ENCODE measurements at regions of chr11 and their contacts with region 1.

Region 1: GRCh38 chr11:95014184-95014821 is 10.8 kb upstream of the KDM4E start:
- DNase-seq: no peak
- ATAC-seq: no peak
- H3K4me3 ChIP-seq: no peak overlapping the region
- H3K4me3 Mint-ChIP-seq: no peak overlapping the region
- H3K27ac ChIP-seq: no peak overlapping the region
- H3K27ac Mint-ChIP-seq: no peak overlapping the region
- H3K4me1 ChIP-seq: no peaks in the 10 kb centered on the region
- H3K4me1 Mint-ChIP-seq: no peaks in the 10 kb centered on the region
- H3K27me3 ChIP-seq: peaks cover 0 to 15% of the 10 kb centered on the region in 2 experiments
- H3K27me3 Mint-ChIP-seq: peaks cover 18 to 26% of the 10 kb centered on the region in 2 donors

Region 2: GRCh38 chr11:95044010-95044409 is 29.7 kb after region 1 on chr11:
- CTCF ChIA-PET with region 1: no interaction called
- POLR2A ChIA-PET with region 1: no interaction called
- DNase-seq: no peak
- ATAC-seq: no peak
- H3K4me3 ChIP-seq: no peak overlapping the region
- H3K4me3 Mint-ChIP-seq: no peak overlapping the region
- H3K27ac ChIP-seq: no peak overlapping the region
- H3K27ac Mint-ChIP-seq: no peak overlapping the region
- H3K4me1 ChIP-seq: no peaks in the 10 kb centered on the region
- H3K4me1 Mint-ChIP-seq: no peaks in the 10 kb centered on the region
- H3K27me3 ChIP-seq: peaks cover 0 to 25% of the 10 kb centered on the region in 2 experiments
- H3K27me3 Mint-ChIP-seq: peaks cover 36 to 38% of the 10 kb centered on the region in 2 donors

Region 3: GRCh38 chr11:95055283-95055897 is 41.1 kb after region 1 on chr11:
- CTCF ChIA-PET with region 1: interaction called in 1 of 2 experiments, 14 read pairs
- POLR2A ChIA-PET with region 1: interaction called in 1 of 2 experiments, 4 read pairs
- DNase-seq: no peak
- ATAC-seq: no peak
- H3K4me3 ChIP-seq: no peak overlapping the region
- H3K4me3 Mint-ChIP-seq: no peak overlapping the region
- H3K27ac ChIP-seq: no peak overlapping the region
- H3K27ac Mint-ChIP-seq: no peak overlapping the region
- H3K4me1 ChIP-seq: no peaks in the 10 kb centered on the region
- H3K4me1 Mint-ChIP-seq: no peaks in the 10 kb centered on the region
- H3K27me3 ChIP-seq: peaks cover 0 to 23% of the 10 kb centered on the region in 2 experiments
- H3K27me3 Mint-ChIP-seq: peaks cover 44 to 47% of the 10 kb centered on the region in 2 donors

Region 4: DNA sequence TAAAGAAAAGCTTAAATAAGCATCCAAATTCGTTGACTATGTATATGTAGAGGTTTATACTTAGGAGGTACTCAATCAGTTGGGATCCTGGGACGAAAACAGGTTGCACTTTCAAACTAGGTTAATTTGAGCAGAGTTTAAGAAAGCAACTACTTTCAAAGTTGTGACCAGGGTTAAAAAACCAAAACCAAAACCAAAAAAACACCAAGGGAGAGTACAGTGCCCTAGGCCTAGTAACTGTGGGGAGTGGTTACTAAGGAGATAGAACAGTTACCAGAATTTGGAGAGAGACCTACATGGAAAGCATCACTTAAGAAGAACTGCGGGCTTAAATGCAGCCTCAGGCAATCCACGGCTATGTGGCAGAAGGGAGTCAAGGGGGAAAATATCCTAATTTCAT is 1523.8 kb after region 1 on chr11:
- CTCF ChIA-PET with region 1: no interaction called
- POLR2A ChIA-PET with region 1: interaction called in 1 of 2 experiments, 13 read pairs
- DNase-seq: no peak
- ATAC-seq: no peak
- H3K4me3 ChIP-seq: no peak overlapping the region
- H3K4me3 Mint-ChIP-seq: no peak overlapping the region
- H3K27ac ChIP-seq: no peak overlapping the region
- H3K27ac Mint-ChIP-seq: no peak overlapping the region
- H3K4me1 ChIP-seq: no peaks in the 10 kb centered on the region
- H3K4me1 Mint-ChIP-seq: no peaks in the 10 kb centered on the region
- H3K27me3 ChIP-seq: no peaks in the 10 kb centered on the region
- H3K27me3 Mint-ChIP-seq: peaks cover 0 to 8% of the 10 kb centered on the region in 2 donors

Measured in T-cell (primary cell).